A549 (cell line): ENCODE measurements at regions of chr10 and their contacts with region 1.

Region 1: GRCh38 chr10:97759158-97759887 is 12.5 kb downstream of the SFRP5 start:
- DNase-seq: peak; percentile 80 to 94
- ATAC-seq: peak; percentile 82 to 96
- H3K4me3 ChIP-seq: no peak overlapping the region
- H3K27ac ChIP-seq: no peak overlapping the region
- H3K4me1 ChIP-seq: no peaks in the 10 kb centered on the region
- CTCF ChIP-seq: peak; percentile 87
- EP300 ChIP-seq: no peak
- POLR2A ChIP-seq: no peak
- RAD21 ChIP-seq: peak; percentile 87 to 92

Region 2: GRCh38 chr10:97270523-97271154 is 488.7 kb before region 1 on chr10:
- CTCF ChIA-PET with region 1: no interaction called
- POLR2A ChIA-PET with region 1: no interaction called
- DNase-seq: no peak
- ATAC-seq: no peak
- H3K4me3 ChIP-seq: no peak overlapping the region
- H3K27ac ChIP-seq: no peak overlapping the region
- H3K4me1 ChIP-seq: no peaks in the 10 kb centered on the region
- CTCF ChIP-seq: no peak
- EP300 ChIP-seq: no peak
- POLR2A ChIP-seq: no peak
- RAD21 ChIP-seq: no peak

Region 3: GRCh38 chr10:97640174-97640867 is 119.0 kb before region 1 on chr10 and contains the start of gene PI4K2A:
- CTCF ChIA-PET with region 1: no interaction called
- POLR2A ChIA-PET with region 1: no interaction called
- DNase-seq: peak; percentile 98 to 99
- ATAC-seq: peak; percentile 97 to 99
- H3K4me3 ChIP-seq: peak within 1 kb of the TSS; percentile 86
- H3K27ac ChIP-seq: peak within 1 kb of the TSS; percentile 79 to 93
- H3K4me1 ChIP-seq: peaks cover 15% of the 10 kb centered on the region
- CTCF ChIP-seq: no peak
- EP300 ChIP-seq: no peak
- POLR2A ChIP-seq: peak; percentile 45
- RAD21 ChIP-seq: no peak
- polyA plus RNA-seq, gene PI4K2A: 16.6 and 18.8 TPM in 2 replicates

Region 4: GRCh38 chr10:97771055-97771811 is 11.9 kb after region 1 on chr10:
- CTCF ChIA-PET with region 1: interaction called, 31 read pairs
- POLR2A ChIA-PET with region 1: no interaction called
- DNase-seq: peak; percentile 43 to 71
- ATAC-seq: peak; percentile 66 to 79
- H3K4me3 ChIP-seq: peak overlapping the region; percentile 50
- H3K27ac ChIP-seq: peak overlapping the region; percentile 19 to 70; a peak in 2 of 6 replicates
- H3K4me1 ChIP-seq: peaks cover 4% of the 10 kb centered on the region; the same call in 2 of the 3 replicates
- CTCF ChIP-seq: no peak; the same call in 2 of the 3 replicates
- EP300 ChIP-seq: no peak
- POLR2A ChIP-seq: no peak
- RAD21 ChIP-seq: peak; percentile 20 to 21; a peak in 1 of 5 replicates

Region 5: GRCh38 chr10:97939446-97939990 is 180.2 kb after region 1 on chr10:
- CTCF ChIA-PET with region 1: no interaction called
- POLR2A ChIA-PET with region 1: no interaction called
- DNase-seq: no peak
- ATAC-seq: no peak; a peak in 1 of 6 replicates
- H3K4me3 ChIP-seq: no peak overlapping the region
- H3K27ac ChIP-seq: no peak overlapping the region
- H3K4me1 ChIP-seq: no peaks in the 10 kb centered on the region
- CTCF ChIP-seq: no peak
- EP300 ChIP-seq: no peak
- POLR2A ChIP-seq: no peak
- RAD21 ChIP-seq: no peak

Region 6: GRCh38 chr10:98006266-98006665 is 246.9 kb after region 1 on chr10:
- CTCF ChIA-PET with region 1: no interaction called
- POLR2A ChIA-PET with region 1: no interaction called
- DNase-seq: no peak
- ATAC-seq: no peak
- H3K4me3 ChIP-seq: no peak overlapping the region
- H3K27ac ChIP-seq: no peak overlapping the region
- H3K4me1 ChIP-seq: no peaks in the 10 kb centered on the region
- CTCF ChIP-seq: no peak
- EP300 ChIP-seq: no peak
- POLR2A ChIP-seq: no peak
- RAD21 ChIP-seq: no peak